Gastrocnemius medialis (tissue), 4 donors: ENCODE measurements at regions of chr9 and their contacts with region 1.

Region 1: GRCh38 chr9:124658165-124659017 is 112.7 kb downstream of the NR6A1 start:
- DNase-seq: peak; percentile 72 to 85
- ATAC-seq: peak; percentile 92 to 95
- H3K4me3 ChIP-seq: peak overlapping the region; percentile 47 to 70 (median 60)
- H3K27ac ChIP-seq: peak overlapping the region; percentile 80 to 84 (median 82)
- H3K4me1 ChIP-seq: peaks cover 58 to 62% of the 10 kb centered on the region in 2 donors
- H3K27me3 ChIP-seq: no peaks in the 10 kb centered on the region
- CTCF ChIP-seq: no peak
- POLR2A ChIP-seq: peak; percentile 25 to 68

Region 2: GRCh38 chr9:124708633-124709291 is 50.4 kb after region 1 on chr9:
- in situ Hi-C with region 1: no loop called
- intact Hi-C with region 1: loop called (anchors 5 kb)
- DNase-seq: no peak
- ATAC-seq: no peak
- H3K4me3 ChIP-seq: no peak overlapping the region
- H3K27ac ChIP-seq: no peak overlapping the region
- H3K4me1 ChIP-seq: no peaks in the 10 kb centered on the region
- H3K27me3 ChIP-seq: no peaks in the 10 kb centered on the region
- CTCF ChIP-seq: no peak
- POLR2A ChIP-seq: no peak

Region 3: DNA sequence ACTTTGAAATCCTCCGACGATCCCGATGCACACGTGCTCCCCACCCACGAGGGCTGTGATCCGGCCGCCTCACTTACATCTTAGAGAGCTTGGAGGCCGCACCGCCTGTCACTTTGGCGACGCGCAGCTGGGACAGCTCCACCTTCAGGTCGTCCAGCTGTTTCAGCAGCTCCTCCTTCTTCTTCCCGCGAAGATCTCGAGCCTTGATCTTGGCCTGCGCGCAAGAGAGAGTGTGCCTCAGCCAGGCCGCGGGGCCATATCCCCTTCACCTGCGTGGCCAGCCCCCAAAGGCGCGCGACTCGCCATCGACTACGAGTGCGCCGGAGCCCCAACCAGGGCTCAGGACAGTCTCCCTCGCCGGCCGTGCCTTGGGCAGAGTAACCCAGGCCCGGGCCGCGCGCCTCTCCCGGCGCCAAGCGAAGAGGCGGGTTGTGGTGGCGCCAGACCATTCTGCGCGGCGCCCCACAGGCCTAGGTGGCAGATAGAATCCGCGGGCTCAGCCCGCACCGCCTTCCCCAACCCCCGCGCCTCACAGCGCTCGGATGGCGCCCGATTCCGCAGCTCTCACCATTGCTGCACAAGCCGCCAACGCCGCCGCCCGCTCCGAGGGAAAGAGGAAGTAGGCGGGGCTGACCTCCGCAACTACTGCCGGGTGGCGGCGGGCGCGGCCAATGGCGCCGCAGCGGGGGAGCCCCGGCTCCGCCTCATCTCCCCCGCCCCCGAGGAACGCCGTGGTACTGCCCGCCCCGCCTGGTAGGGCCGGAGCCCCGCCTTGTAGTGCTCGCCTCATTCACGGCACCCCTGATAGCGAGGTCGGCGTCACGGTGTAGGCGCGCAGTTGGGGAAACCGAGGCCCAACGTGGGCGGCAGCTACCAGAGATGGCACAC is 203.2 kb after region 1 on chr9 and contains the starts of genes ARPC5L and RPL35:
- in situ Hi-C with region 1: no loop called
- intact Hi-C with region 1: loop called (anchors 10 kb)
- DNase-seq: peak; percentile 91 to 92
- ATAC-seq: peak; percentile 86 to 89
- H3K4me3 ChIP-seq: peak within 1 kb of the TSS; percentile 85 to 100 (median 100)
- H3K27ac ChIP-seq: peak within 1 kb of the TSS; percentile 87 to 97 (median 92)
- H3K4me1 ChIP-seq: peaks cover 35 to 38% of the 10 kb centered on the region in 2 donors
- H3K27me3 ChIP-seq: no peaks in the 10 kb centered on the region
- CTCF ChIP-seq: peak in 2 of 5 experiments; percentile 27 to 38
- POLR2A ChIP-seq: peak; percentile 95 to 97
- total RNA-seq, gene ARPC5L: 28.9 to 47.1 (median 29.2) TPM
- total RNA-seq, gene RPL35: 2,099 to 2,608 (median 2,478) TPM